Activated B cell treated with CpG ODN at 0.5 μM for 24 hours (primary cell): ENCODE measurements at regions of chr1 and their contacts with region 1.

Region 1: DNA sequence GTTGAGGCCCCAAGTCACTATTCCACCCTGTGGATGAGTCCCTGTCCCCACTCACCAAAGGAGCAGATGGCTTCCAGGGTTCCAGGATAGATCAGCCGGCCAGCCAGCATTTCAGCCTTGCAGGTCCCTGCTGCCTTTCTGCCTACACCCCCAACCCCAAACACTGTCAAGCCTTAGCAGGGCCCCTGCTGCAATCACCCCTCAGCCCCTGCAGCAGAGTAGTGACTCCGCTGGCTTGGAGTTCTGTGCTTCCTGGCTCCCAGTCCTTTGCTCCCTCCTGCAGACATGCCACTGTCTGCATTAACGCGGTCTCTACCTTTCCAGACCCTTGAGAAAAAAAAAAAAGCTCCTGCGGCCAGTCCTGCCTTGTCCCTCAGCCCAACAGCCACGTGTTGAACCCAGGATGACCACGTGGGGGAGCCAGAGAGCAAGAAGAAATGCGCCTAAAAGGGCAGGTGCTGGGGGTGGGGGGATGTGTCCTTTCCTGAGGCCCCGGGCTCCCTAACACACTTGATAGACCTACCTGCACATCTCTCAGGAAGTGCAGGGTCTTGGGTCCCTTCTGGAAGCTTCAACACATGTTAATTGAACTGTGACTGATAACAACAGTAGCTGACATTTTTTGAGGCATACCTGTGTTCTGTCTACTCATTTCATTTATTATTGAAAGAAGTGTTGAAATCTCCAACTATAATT is 37.4 kb downstream of the RASSF5 start:
- DNase-seq: peak; percentile 81
- ATAC-seq: peak; percentile 93
- H3K4me3 Mint-ChIP-seq: no peak overlapping the region
- H3K27ac Mint-ChIP-seq: no peak overlapping the region
- H3K4me1 Mint-ChIP-seq: peaks cover 4% of the 10 kb centered on the region
- H3K27me3 Mint-ChIP-seq: no peaks in the 10 kb centered on the region
- CTCF ChIP-seq: peak; percentile 63

Region 2: GRCh38 chr1:206419250-206419649 is 125.5 kb before region 1 on chr1:
- CTCF ChIA-PET with region 1: no interaction called
- POLR2A ChIA-PET with region 1: no interaction called
- intact Hi-C with region 1: no loop called
- DNase-seq: no peak
- ATAC-seq: no peak
- H3K4me3 Mint-ChIP-seq: no peak overlapping the region
- H3K27ac Mint-ChIP-seq: no peak overlapping the region
- H3K4me1 Mint-ChIP-seq: peaks cover 6% of the 10 kb centered on the region
- H3K27me3 Mint-ChIP-seq: no peaks in the 10 kb centered on the region
- CTCF ChIP-seq: no peak

Region 3: DNA sequence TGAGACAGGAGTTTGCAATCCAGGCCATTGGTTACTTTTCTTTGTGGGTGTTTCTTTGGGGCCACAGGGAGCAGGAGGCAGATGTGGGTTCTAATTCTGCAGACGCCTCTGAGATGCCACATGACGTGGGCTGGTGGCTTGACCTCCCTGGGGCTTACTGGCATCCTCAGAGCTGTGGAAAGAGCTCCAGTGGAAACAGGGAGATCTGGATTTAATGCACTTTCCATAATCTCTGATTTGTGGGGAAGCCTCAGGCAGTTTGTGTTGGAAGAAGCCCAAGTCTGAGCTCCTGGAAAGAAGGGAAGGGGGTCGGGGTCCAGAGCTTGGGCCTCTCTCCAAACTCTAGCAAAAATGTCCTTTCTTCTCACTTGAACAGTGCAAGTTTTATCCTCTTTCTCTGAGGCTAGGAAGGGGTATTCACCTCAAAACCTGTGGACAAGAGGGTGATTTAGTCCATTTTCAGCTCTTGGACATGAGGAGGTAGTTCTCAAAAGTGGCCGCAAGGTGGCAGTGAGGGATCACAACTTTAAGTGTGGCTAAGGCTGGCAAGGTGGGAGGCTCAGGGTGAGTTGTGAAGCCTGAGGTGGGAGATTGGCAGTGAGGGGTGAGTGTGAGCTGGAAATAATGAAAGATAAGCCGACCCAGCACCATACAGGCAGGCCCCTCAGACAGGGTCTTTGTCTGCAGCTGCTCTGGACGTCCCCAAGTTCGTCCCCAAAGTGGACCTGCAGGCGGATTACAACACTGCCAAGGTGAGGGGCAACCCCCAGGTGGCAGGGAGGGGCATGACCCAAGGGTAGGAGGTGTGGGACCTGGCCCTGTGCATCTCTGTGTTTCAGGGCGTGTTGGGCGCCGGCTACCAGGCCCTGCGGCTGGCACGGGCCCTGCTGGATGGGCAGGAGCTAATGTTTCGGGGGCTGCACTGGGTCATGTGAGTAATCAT is 65.3 kb before region 1 on chr1:
- CTCF ChIA-PET with region 1: interaction called, 17 read pairs
- POLR2A ChIA-PET with region 1: interaction called, 3 read pairs
- intact Hi-C with region 1: loop called (anchors 1 kb)
- DNase-seq: no peak
- ATAC-seq: peak; percentile 74
- H3K4me3 Mint-ChIP-seq: no peak overlapping the region
- H3K27ac Mint-ChIP-seq: no peak overlapping the region
- H3K4me1 Mint-ChIP-seq: peaks cover 16% of the 10 kb centered on the region
- H3K27me3 Mint-ChIP-seq: no peaks in the 10 kb centered on the region
- CTCF ChIP-seq: peak; percentile 27

Region 4: GRCh38 chr1:206507284-206508129 is 37.2 kb before region 1 on chr1 and contains the start of gene RASSF5:
- CTCF ChIA-PET with region 1: interaction called, 6 read pairs
- POLR2A ChIA-PET with region 1: interaction called, 3 read pairs
- intact Hi-C with region 1: loop called (anchors 5 kb)
- DNase-seq: peak; percentile 80
- ATAC-seq: peak; percentile 91
- H3K4me3 Mint-ChIP-seq: peak within 1 kb of the TSS; percentile 82
- H3K27ac Mint-ChIP-seq: peak within 1 kb of the TSS; percentile 24
- H3K4me1 Mint-ChIP-seq: peaks cover 33% of the 10 kb centered on the region
- H3K27me3 Mint-ChIP-seq: peaks cover 17% of the 10 kb centered on the region
- CTCF ChIP-seq: no peak
- total RNA-seq, gene RASSF5: 114 and 116 TPM in 2 replicates

Region 5: GRCh38 chr1:206563367-206564207 is 18.9 kb after region 1 on chr1:
- CTCF ChIA-PET with region 1: interaction called, 32 read pairs
- POLR2A ChIA-PET with region 1: interaction called, 13 read pairs
- intact Hi-C with region 1: no loop called
- DNase-seq: no peak
- ATAC-seq: peak; percentile 3
- H3K4me3 Mint-ChIP-seq: peak overlapping the region; percentile 63
- H3K27ac Mint-ChIP-seq: peak overlapping the region; percentile 73
- H3K4me1 Mint-ChIP-seq: peaks cover 98% of the 10 kb centered on the region
- H3K27me3 Mint-ChIP-seq: no peaks in the 10 kb centered on the region
- CTCF ChIP-seq: no peak

Region 6: DNA sequence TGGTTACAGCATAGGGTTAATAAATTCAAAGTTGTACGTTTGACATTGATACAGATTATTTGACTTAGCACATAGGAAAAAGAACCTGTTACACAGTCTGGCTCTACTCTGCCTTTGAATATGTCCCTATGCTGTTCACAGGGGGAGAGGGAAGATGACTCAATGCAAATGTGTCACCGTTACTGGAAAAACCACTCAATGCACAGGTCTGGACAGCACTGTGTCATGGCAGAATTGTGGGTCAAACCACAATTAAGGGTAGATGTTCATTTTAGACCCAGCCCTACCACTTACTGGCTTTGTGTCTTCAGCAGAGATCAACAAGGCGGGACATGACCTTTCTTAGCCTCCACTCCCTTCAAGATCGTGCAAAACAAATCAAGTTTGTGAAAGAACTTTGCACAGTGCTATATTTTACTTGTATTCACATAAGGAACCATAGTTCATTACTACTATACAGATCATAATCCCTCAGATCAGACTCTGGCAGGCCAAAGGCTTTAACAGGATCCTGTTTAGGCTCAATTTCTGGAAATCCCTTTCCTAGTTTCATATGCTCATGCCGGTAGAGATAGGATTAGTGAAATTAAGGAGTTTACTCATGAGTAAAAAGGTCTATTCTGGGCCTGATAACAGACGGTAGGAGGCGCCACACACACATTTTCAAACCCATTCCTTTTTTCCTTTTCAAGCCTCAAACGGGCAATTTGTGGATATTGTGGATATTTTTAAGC is 45.5 kb after region 1 on chr1:
- CTCF ChIA-PET with region 1: interaction called, 349 read pairs
- POLR2A ChIA-PET with region 1: interaction called, 75 read pairs
- intact Hi-C with region 1: no loop called
- DNase-seq: no peak
- ATAC-seq: peak; percentile 81
- H3K4me3 Mint-ChIP-seq: no peak overlapping the region
- H3K27ac Mint-ChIP-seq: peak overlapping the region; percentile 42
- H3K4me1 Mint-ChIP-seq: peaks cover 9% of the 10 kb centered on the region
- H3K27me3 Mint-ChIP-seq: no peaks in the 10 kb centered on the region
- CTCF ChIP-seq: no peak

Region 7: DNA sequence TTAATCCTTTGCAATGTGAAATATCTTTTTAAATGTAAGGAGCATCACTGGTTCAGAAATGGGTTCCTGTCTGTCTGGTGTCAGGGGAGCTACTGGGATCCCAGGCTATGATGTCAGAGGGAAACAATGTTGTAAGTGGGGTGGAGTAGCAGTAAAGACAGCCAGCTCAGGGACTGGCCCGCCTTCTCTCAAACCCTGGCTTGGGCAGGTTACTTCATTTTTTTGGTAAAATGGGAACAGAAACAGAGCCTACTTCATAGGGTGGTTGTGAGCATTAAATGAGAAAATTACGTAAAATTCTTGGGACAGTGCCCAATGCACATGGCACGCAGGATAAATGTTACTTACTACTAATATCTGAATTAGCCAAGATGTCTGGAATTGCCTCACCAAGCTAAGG is 290.0 kb after region 1 on chr1:
- CTCF ChIA-PET with region 1: no interaction called
- POLR2A ChIA-PET with region 1: no interaction called
- intact Hi-C with region 1: no loop called
- DNase-seq: no peak
- ATAC-seq: no peak
- H3K4me3 Mint-ChIP-seq: no peak overlapping the region
- H3K27ac Mint-ChIP-seq: no peak overlapping the region
- H3K4me1 Mint-ChIP-seq: peaks cover 45% of the 10 kb centered on the region
- H3K27me3 Mint-ChIP-seq: no peaks in the 10 kb centered on the region
- CTCF ChIP-seq: no peak